ENCODE measurements at regions of chr1 and their contacts with region 1.

Region 1: GRCh38 chr1:33367485-33368405 is 46.8 kb upstream of the A3GALT2 start:
- DNase-seq: peak; percentile 89 to 92 (median 90)
- ATAC-seq: peak; percentile 95
- H3K4me3 ChIP-seq: no peak overlapping the region
- H3K27ac ChIP-seq: no peak overlapping the region
- H3K4me1 ChIP-seq: peaks cover 7 to 11% of the 10 kb centered on the region in 2 experiments; a peak in 4 of 5 replicates
- H3K27me3 ChIP-seq: peaks cover 23 to 38% of the 10 kb centered on the region in 2 experiments
- CTCF ChIP-seq: peak; percentile 97 to 99 (median 97)
- EP300 ChIP-seq: no peak
- POLR2A ChIP-seq: no peak
- RAD21 ChIP-seq: peak; percentile 98

Region 2: GRCh38 chr1:33137800-33138199 is 229.9 kb before region 1 on chr1:
- CTCF ChIA-PET with region 1: no interaction called
- POLR2A ChIA-PET with region 1: no interaction called
- in situ Hi-C with region 1: no loop called
- intact Hi-C with region 1: loop called (anchors 10 kb)
- DNase-seq: peak; percentile 47 to 58 (median 54)
- ATAC-seq: peak; percentile 73
- H3K4me3 ChIP-seq: no peak overlapping the region
- H3K27ac ChIP-seq: no peak overlapping the region
- H3K4me1 ChIP-seq: peaks cover 0 to 6% of the 10 kb centered on the region in 2 experiments; a peak in 3 of 5 replicates
- H3K27me3 ChIP-seq: peaks cover 6 to 33% of the 10 kb centered on the region in 2 experiments; a peak in 4 of 5 replicates
- CTCF ChIP-seq: peak; percentile 59 to 72 (median 61)
- EP300 ChIP-seq: no peak
- POLR2A ChIP-seq: no peak
- RAD21 ChIP-seq: peak in 1 of 2 experiments; percentile 54; a peak in 2 of 4 replicates

Region 3: DNA sequence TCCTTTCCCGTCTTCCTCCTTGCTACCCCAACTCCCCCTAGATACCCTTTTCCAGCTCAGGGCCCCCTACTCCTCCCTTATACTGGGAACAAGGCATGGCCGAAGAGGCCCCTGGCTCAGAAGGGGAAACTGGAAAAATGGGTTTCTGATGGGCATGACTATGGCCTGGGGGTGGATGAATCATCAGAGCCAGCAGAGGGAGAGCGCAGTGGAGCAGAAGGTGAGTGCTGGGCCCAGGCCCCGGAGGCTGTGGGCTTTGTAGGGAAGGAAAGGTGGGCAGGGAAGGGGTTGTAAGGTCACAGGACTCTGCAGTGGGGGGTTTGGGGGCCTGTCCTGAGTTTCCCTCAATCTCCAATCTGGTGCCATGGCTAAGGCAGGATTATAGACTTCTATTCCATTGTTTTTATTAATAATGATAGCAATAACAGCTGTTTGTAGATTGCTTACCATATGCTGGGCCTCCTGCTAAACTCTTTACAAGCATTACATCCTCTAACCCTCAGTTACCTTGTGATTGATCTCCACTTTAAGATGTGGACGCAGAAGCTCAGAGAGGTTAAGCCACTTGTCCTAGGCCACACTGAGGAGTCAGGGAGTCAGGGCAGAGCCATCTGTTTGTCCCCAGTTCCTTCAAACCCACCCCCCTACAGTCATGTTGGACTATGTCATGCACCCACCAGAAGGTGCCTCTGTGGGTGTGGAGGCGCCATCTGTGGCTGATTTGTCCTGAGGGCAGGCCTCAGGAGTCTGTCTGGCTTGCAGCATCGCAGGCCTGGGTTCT is 147.7 kb before region 1 on chr1:
- CTCF ChIA-PET with region 1: interaction called, 3 read pairs
- POLR2A ChIA-PET with region 1: no interaction called
- in situ Hi-C with region 1: no loop called
- intact Hi-C with region 1: loop called (anchors 1 kb)
- DNase-seq: no peak
- ATAC-seq: no peak
- H3K4me3 ChIP-seq: no peak overlapping the region
- H3K27ac ChIP-seq: no peak overlapping the region
- H3K4me1 ChIP-seq: no peaks in the 10 kb centered on the region
- H3K27me3 ChIP-seq: peaks cover 0 to 7% of the 10 kb centered on the region in 2 experiments; a peak in 1 of 5 replicates
- CTCF ChIP-seq: no peak
- EP300 ChIP-seq: no peak
- POLR2A ChIP-seq: no peak
- RAD21 ChIP-seq: no peak

Region 4: DNA sequence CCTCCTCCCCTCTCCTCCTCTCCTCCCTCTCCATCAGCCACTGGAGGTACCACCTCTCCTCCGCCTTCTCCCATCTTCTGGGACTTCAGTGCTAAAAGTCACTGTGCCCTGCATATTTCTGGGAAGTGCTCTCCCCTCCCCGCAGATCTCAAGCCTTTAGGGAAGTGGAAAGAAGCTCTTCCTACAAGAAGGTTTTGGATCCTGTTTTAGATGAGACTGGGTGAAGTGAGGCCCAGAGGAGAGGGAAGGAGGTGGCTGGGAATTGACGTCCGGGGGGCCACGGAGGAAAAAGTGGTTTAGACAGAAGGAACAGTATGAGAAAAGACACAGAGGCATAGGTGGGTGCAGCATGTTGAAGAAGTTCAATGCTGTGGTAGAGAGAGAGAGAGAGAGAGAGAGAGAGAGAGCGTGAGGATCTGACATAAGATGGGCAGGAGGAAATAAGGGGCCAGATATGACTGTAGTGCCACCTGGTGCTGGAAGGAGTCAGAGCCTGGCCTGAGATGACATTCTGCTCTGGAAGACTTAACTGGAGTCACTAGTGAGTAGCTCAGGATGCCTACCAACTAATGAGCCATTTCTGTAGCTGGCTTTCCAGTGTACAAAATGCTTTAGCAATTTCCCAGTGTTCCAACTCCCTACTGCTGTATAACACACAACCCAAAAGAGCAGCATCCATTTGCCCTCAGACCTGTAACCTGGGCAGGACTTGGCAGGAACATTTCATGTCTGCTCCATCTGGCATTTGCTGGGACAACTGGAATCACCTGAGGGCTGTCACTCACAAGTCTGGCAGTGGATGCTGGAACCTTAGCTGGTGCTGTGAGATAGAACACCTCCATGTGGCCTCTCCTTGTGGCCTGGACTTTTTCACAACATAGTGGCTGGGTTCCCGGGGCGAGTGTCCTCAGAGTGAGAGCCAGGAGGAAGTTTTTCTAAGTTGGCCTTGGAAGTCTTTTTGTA is 88.1 kb after region 1 on chr1:
- CTCF ChIA-PET with region 1: no interaction called
- POLR2A ChIA-PET with region 1: no interaction called
- in situ Hi-C with region 1: no loop called
- intact Hi-C with region 1: loop called (anchors 5 kb)
- DNase-seq: peak; percentile 45 to 70 (median 56)
- ATAC-seq: peak; percentile 95
- H3K4me3 ChIP-seq: no peak overlapping the region
- H3K27ac ChIP-seq: no peak overlapping the region
- H3K4me1 ChIP-seq: peaks cover 0 to 4% of the 10 kb centered on the region in 2 experiments; a peak in 1 of 5 replicates
- H3K27me3 ChIP-seq: peaks cover 11 to 27% of the 10 kb centered on the region in 2 experiments; a peak in 3 of 5 replicates
- CTCF ChIP-seq: peak; percentile 74 to 91 (median 75)
- EP300 ChIP-seq: no peak
- POLR2A ChIP-seq: no peak
- RAD21 ChIP-seq: peak; percentile 92 to 97

Region 5: GRCh38 chr1:33472349-33472980 is 104.7 kb after region 1 on chr1 and contains the start of gene ZSCAN20:
- CTCF ChIA-PET with region 1: interaction called, 4 read pairs
- POLR2A ChIA-PET with region 1: interaction called, 4 read pairs
- in situ Hi-C with region 1: no loop called
- intact Hi-C with region 1: loop called (anchors 5 kb)
- DNase-seq: peak; percentile 91 to 97 (median 93)
- ATAC-seq: peak; percentile 98
- H3K4me3 ChIP-seq: peak within 1 kb of the TSS; percentile 60
- H3K27ac ChIP-seq: peak within 1 kb of the TSS; percentile 27; the same call in 2 of the 3 replicates
- H3K4me1 ChIP-seq: peaks cover 3 to 5% of the 10 kb centered on the region in 2 experiments; a peak in 3 of 5 replicates
- H3K27me3 ChIP-seq: peaks cover 0 to 8% of the 10 kb centered on the region in 2 experiments; a peak in 1 of 5 replicates
- CTCF ChIP-seq: no peak
- EP300 ChIP-seq: peak; percentile 44; the same call in 1 of the 2 replicates
- POLR2A ChIP-seq: peak; percentile 76
- RAD21 ChIP-seq: no peak
- polyA plus RNA-seq, gene ZSCAN20: 0.36 to 0.58 TPM

Region 6: DNA sequence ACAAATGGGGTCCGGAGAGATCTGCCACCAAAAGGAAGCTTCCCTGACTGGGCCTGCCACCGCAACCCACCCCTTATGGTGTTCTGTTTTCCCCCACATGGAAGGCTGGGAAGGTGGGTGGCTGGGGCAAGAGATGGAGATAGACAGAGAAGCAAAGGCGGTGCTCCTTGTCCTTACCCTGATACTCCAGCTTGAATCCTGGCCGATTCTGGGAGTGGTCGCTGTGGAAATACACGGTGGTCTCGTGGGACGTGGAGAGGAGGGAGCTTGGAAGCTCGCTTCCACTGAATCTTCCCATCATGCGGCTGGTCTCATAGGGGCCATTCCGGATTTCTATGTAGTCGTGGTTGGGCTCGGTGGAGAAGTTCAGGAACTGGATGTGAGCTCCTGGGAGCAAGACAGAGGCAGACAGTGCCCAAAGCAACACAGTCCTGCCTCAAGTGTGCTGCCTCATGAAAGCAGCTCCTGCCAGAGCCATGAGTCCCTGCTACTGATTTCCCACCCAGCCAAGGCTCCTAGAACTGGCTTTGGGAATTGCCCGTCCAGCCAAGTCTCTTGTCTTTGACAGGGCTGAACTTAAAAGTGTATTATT is 243.2 kb after region 1 on chr1:
- CTCF ChIA-PET with region 1: no interaction called
- POLR2A ChIA-PET with region 1: no interaction called
- in situ Hi-C with region 1: no loop called
- intact Hi-C with region 1: loop called (anchors 5 kb)
- DNase-seq: no peak
- ATAC-seq: no peak
- H3K4me3 ChIP-seq: no peak overlapping the region
- H3K27ac ChIP-seq: no peak overlapping the region
- H3K4me1 ChIP-seq: no peaks in the 10 kb centered on the region
- H3K27me3 ChIP-seq: peaks cover 8 to 37% of the 10 kb centered on the region in 2 experiments; a peak in 4 of 5 replicates
- CTCF ChIP-seq: no peak
- EP300 ChIP-seq: no peak
- POLR2A ChIP-seq: no peak
- RAD21 ChIP-seq: no peak

Measured in K562 (cell line).